ENCODE measurements at regions of chr5 and their contacts with region 1.

Region 1: GRCh38 chr5:10627160-10627701 is 63.4 kb downstream of the ANKRD33B start:
- DNase-seq: no peak
- H3K4me3 Mint-ChIP-seq: peak overlapping the region; percentile 50
- H3K27ac Mint-ChIP-seq: peak overlapping the region; percentile 17
- H3K4me1 Mint-ChIP-seq: peaks cover 27% of the 10 kb centered on the region
- H3K27me3 Mint-ChIP-seq: no peaks in the 10 kb centered on the region
- CTCF ChIP-seq: no peak

Region 2: DNA sequence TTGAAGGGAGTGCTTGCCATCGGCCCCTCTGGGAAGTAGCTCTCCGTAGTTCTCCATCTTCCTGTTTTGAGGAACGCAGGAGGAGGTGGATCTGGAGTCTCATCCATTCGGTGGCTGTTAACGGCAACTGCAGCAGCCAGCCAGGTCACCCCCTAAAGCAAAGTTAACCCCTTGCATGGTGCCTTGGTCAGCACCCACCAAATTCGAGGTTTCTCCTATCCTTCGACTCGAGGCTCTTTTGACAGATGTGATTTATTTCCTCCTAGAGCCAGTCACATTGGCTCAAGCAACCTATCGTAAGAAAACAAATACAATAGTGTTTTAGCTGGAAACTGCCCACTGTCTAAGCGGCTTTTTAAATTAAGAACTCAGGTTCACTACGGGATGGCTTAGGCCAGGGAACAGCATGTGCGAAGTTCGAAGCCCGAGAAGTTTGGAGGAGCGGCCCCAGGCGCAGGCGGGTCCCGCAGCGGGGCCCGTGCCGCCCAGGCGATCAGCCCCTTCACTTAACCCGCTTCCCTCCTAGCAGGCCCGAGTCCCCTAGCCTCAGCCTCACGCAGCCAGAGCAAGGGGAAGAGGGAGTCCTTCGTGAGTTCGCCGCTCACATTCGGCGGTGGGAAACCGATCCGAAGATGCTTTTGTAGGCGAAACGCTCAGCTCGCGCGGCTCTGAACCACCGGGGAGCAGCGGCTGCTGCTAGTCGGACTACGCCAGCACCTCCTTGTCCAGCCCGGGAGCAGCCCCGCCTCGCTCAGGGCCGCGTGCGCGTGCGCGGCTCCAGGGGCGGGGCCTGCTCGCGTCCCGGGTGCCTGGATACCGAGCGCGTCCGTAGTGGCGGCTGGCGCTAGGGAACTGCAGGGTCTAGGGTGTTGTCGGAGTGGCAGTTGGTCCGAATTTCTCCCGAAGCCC is 185.9 kb before region 1 on chr5 and contains the start of gene ROPN1L:
- CTCF ChIA-PET with region 1: interaction called, 18 read pairs
- POLR2A ChIA-PET with region 1: interaction called, 3 read pairs
- intact Hi-C with region 1: no loop called
- DNase-seq: peak; percentile 87
- H3K4me3 Mint-ChIP-seq: peak within 1 kb of the TSS; percentile 74
- H3K27ac Mint-ChIP-seq: no peak within 1 kb of the TSS
- H3K4me1 Mint-ChIP-seq: no peaks in the 10 kb centered on the region
- H3K27me3 Mint-ChIP-seq: no peaks in the 10 kb centered on the region
- CTCF ChIP-seq: no peak
- total RNA-seq, gene ROPN1L: 0.82 TPM in 1 of 2 replicates, not detected in the other

Region 3: GRCh38 chr5:10590226-10590999 is 36.8 kb before region 1 on chr5:
- CTCF ChIA-PET with region 1: interaction called, 15 read pairs
- POLR2A ChIA-PET with region 1: no interaction called
- intact Hi-C with region 1: no loop called
- DNase-seq: peak; percentile 80
- H3K4me3 Mint-ChIP-seq: no peak overlapping the region
- H3K27ac Mint-ChIP-seq: peak overlapping the region; percentile 64
- H3K4me1 Mint-ChIP-seq: peaks cover 17% of the 10 kb centered on the region
- H3K27me3 Mint-ChIP-seq: no peaks in the 10 kb centered on the region
- CTCF ChIP-seq: no peak

Region 4: DNA sequence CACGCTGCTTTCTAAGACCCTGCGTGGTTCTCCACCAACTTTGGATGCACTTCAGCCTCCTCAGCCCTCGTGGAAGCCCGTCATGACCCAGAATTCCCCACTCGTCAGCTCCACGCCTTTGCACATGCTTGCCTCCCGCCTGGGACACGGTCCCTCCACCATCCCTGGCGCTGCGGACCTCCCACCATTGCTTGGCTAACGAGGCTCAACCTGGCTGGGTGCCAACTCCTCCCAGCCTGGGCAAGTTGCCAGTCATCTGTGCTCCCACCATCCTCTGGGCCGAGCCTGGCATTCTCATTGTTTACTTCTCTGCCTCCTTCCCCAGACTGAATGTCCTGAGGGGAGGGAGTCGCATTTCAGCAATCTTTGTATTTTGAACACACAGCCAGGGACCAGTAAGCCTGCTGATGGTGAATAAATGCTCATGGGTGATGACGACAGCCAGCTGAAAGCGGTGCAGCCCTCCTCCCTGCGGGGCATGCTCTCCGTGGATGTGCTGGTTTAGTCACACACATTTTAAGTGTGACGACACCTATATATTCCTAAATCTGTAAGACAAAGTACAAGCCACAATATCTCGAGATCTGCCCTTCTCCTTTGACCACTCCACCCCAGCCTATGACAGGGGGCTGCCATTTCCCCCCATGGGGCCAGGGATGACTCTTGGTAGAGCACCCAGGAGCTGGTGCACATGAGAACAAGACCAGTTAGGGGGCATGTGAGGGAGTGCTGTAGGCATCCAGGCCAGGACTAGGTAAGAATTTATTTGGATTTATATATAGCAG is 25.8 kb before region 1 on chr5:
- CTCF ChIA-PET with region 1: interaction called, 10 read pairs
- POLR2A ChIA-PET with region 1: interaction called, 7 read pairs
- intact Hi-C with region 1: loop called (anchors 1 kb)
- DNase-seq: peak; percentile 99
- H3K4me3 Mint-ChIP-seq: peak overlapping the region; percentile 72
- H3K27ac Mint-ChIP-seq: peak overlapping the region; percentile 96
- H3K4me1 Mint-ChIP-seq: peaks cover 33% of the 10 kb centered on the region
- H3K27me3 Mint-ChIP-seq: no peaks in the 10 kb centered on the region
- CTCF ChIP-seq: no peak

Region 5: GRCh38 chr5:10607666-10608073 is 19.6 kb before region 1 on chr5:
- CTCF ChIA-PET with region 1: interaction called, 20 read pairs
- POLR2A ChIA-PET with region 1: no interaction called
- intact Hi-C with region 1: no loop called
- DNase-seq: peak; percentile 54
- H3K4me3 Mint-ChIP-seq: no peak overlapping the region
- H3K27ac Mint-ChIP-seq: no peak overlapping the region
- H3K4me1 Mint-ChIP-seq: peaks cover 7% of the 10 kb centered on the region
- H3K27me3 Mint-ChIP-seq: no peaks in the 10 kb centered on the region
- CTCF ChIP-seq: no peak

Region 6: DNA sequence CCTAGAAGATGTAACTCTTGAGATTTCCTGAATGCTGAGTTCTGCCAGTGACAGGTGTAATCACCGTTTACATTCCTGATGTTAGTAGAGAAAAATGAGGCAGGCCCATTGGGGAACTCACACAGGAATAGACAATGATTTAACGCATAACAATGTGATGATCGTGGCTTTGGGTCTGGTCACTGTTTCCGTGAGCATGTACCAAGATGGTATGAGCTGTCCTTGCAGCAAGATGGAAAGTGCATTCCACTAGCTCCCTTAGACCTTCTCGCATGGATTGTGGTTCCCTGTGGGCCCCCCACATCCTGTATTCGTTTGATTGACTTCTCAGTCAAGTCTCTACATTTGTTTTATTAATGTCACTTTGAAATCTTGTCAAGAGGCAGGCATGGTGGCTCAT is 257.8 kb after region 1 on chr5:
- CTCF ChIA-PET with region 1: no interaction called
- POLR2A ChIA-PET with region 1: no interaction called
- intact Hi-C with region 1: no loop called
- DNase-seq: no peak
- H3K4me3 Mint-ChIP-seq: no peak overlapping the region
- H3K27ac Mint-ChIP-seq: no peak overlapping the region
- H3K4me1 Mint-ChIP-seq: no peaks in the 10 kb centered on the region
- H3K27me3 Mint-ChIP-seq: peaks cover 6% of the 10 kb centered on the region
- CTCF ChIP-seq: no peak

Region 7: GRCh38 chr5:10902145-10902544 is 274.9 kb after region 1 on chr5:
- CTCF ChIA-PET with region 1: no interaction called
- POLR2A ChIA-PET with region 1: no interaction called
- intact Hi-C with region 1: no loop called
- DNase-seq: peak; percentile 35
- H3K4me3 Mint-ChIP-seq: no peak overlapping the region
- H3K27ac Mint-ChIP-seq: no peak overlapping the region
- H3K4me1 Mint-ChIP-seq: peaks cover 9% of the 10 kb centered on the region
- H3K27me3 Mint-ChIP-seq: peaks cover 19% of the 10 kb centered on the region
- CTCF ChIP-seq: no peak

Measured in MCF 10A (cell line).